ENCODE measurements at regions of chr3 and their contacts with region 1.

Region 1: DNA sequence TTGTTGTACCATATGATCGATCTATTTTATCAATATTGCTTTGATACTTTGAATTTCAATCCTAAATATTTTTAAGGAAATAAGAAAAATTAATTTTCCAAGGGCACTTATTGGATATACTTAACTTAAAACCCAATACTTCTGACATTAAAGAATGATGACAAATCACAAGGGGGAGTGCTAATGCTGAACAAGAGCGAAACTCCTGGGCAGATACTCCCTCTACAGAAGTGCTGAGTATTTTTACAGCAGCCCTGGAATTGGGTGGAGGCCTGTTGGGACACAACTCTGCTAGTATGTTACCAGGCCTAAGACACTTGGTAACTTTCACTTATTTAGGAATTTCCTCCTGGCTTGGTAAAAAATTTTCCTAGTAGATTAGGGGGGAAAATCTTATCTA is 46.2 kb downstream of the DENND6A start:
- DNase-seq: no peak
- H3K4me3 ChIP-seq: no peak overlapping the region
- H3K27ac ChIP-seq: no peak overlapping the region
- H3K4me1 ChIP-seq: no peaks in the 10 kb centered on the region
- CTCF ChIP-seq: peak; percentile 43; the same call in 1 of the 2 replicates

Region 2: GRCh38 chr3:57826245-57826951 is 179.7 kb after region 1 on chr3:
- CTCF ChIA-PET with region 1: no interaction called
- POLR2A ChIA-PET with region 1: no interaction called
- intact Hi-C with region 1: loop called (anchors 5 kb)
- DNase-seq: no peak
- H3K4me3 ChIP-seq: no peak overlapping the region
- H3K27ac ChIP-seq: no peak overlapping the region
- H3K4me1 ChIP-seq: peaks cover 15% of the 10 kb centered on the region
- CTCF ChIP-seq: peak; percentile 68

Region 3: DNA sequence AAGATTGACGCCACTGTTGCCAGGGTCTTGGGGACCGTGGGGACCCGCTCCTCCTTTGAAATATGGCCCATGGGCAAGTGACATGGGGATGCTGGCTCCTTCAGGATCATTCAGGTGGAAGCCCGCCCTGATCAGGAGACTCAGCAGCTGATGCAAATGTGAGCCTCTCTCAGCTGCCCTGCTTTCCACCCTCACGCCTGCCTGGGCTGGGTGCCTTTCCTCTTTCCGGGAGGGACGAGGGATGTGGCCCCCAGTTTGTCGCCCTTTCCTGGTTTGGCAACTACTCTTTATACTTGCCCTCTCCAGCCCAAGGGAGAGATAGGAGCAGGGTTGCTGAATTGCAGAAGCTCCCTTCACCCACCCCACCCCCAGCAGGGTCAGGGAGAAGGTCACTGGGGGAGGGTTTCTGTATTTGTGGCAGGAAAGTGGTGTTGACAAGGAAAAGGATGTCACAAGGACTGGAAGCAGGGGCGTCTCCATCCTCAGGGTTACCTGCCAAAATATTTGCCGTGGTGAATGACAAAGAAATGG is 542.3 kb after region 1 on chr3:
- CTCF ChIA-PET with region 1: no interaction called
- POLR2A ChIA-PET with region 1: no interaction called
- intact Hi-C with region 1: no loop called
- DNase-seq: no peak
- H3K4me3 ChIP-seq: no peak overlapping the region
- H3K27ac ChIP-seq: no peak overlapping the region
- H3K4me1 ChIP-seq: no peaks in the 10 kb centered on the region
- CTCF ChIP-seq: no peak

Measured in OCI-LY7 (cell line).